HEK293T (cell line): ENCODE measurements at regions of chr3 and their contacts with region 1.

Region 1: DNA sequence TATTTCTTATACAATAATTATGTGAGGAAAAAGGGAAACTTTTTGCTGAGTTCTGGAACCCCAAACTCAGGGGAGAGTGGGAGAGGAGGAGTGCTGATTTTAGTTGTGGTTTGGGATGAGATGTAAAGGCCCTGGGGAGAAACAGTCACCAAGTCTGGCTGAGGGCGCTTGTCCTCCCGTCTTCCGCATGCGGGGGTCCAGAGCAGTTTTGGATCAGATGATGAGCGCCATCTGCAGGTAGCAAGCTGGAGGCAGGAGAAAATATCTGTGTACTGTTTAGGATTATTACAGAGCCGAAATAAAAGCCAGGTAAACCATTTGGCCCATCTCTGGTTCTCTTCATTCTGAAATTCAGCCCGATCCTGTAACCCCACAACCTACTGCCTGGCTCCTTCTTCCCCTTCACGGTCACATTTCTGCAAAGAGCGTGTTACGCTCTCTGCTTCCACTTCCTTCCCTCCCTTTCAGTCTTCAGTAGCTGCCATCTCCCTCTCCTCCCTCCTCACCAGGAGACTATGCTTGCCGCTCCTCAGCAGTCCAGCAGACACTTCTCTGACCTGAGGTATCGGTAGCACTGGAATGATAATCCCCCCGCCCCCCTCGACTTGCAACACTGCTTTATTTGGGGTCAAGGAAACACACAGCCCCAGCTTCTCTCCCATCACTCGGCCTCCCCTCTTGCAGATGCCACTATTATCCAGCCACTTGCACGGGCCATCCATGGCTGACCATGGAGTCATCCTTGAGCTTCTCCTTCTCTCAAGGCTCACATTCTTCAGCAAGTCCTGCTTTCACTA is 1.4 kb upstream of the PARP14 start:
- DNase-seq: peak; percentile 74

Region 2: DNA sequence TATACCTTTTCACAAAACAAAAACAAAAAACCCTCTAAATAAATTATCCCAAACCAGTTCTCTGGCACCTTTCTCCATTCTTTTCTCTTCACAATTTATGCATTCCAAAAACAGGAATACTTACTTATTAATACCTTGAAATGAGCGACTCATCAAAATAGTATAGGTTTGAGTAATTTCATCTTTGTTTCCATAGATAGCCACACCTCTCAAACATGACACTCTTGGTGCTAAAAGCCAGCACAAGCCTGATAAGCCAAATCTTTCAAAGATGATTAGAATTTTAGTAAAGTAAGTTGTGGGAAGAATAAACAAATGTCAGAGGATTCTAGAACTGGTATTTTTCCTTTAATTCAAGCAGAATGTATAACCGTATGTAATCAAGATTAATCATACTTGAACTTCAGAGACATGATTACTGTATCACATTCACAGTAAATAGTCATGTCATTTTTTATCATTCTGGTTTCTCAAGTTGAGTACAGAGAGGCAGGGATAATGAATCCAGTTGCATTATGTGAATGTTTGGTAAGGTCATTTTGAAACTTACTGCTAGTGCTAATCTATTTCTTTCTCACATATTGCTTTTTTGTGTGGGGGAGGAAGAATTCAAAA is 251.3 kb before region 1 on chr3:
- CTCF ChIA-PET with region 1: no interaction called
- POLR2A ChIA-PET with region 1: no interaction called
- DNase-seq: no peak

Region 3: DNA sequence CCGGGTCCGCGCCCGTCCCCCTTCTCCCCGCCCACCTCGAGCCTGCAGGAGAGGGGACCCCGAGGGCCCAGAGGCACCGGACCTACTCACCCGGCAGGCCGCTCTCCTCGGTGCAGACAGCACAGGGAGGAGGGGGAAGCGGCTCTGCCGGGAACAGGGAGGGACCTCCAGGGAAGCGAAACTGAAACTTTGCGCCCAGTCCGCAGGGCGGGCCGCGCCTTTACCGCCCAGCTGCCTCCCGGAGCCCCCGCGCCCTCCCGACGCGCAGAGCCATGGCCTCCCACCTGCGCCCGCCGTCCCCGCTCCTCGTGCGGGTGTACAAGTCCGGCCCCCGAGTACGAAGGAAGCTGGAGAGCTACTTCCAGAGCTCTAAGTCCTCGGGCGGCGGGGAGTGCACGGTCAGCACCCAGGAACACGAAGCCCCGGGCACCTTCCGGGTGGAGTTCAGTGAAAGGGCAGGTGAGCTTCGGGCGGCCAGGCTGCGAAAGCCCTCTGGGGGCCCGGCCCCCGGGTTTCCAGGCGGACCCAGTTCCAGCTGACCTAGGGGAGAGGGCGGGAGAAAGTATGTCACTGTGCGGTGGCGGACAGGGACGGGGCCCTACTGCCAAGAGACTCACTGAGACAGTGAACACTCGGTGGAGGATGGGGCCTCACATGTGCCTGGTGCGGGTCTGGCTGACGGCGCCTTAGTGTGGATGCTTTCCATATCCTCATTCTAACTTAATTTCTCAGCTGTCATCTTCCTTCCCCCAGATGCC is 114.9 kb before region 1 on chr3 and contains the starts of genes DTX3L and PARP9:
- CTCF ChIA-PET with region 1: interaction called, 15 read pairs
- POLR2A ChIA-PET with region 1: interaction called, 10 read pairs
- DNase-seq: peak; percentile 60

Region 4: DNA sequence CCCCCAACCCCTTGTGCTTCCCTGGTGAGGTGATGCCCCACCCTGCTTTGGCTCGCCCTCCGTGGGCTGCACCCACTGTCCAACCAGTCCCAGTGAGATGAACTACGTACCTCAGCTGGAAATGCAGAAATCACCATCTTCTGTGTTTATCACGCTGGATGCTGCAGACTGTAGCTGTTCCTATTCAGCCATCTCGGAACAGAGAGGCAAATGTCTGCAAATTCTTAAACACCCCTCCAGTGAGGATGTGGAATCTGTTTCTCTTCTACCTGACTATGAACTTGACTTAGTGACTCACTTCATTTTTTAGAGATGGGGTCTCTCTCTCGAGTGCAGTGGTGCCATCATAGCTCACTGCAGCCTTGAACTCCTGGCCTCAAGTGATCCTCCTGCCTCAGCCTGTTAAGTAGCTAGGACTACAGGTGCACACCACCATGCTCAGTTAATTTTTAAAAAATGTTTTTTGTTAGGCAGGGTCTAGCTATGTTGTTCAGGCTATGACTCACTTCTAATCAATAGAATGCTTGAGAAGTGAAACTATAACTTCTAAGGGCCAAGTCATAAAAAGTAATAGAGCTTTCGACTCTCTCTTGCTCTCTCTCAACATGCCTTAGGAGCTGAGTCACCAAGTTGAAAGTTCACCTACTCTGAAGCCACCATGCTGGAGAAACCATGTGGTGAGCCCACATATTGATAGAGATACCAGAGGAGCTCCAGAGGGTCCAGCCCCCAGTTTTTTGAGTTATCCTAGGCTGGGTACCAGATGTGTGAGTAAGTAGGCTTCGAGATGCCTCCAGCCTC is 10.2 kb before region 1 on chr3:
- CTCF ChIA-PET with region 1: interaction called, 10 read pairs
- POLR2A ChIA-PET with region 1: no interaction called
- DNase-seq: no peak

Region 5: GRCh38 chr3:122691195-122691594 is 11.9 kb after region 1 on chr3:
- CTCF ChIA-PET with region 1: no interaction called
- POLR2A ChIA-PET with region 1: no interaction called
- DNase-seq: no peak